ENCODE measurements at regions of chr4 and their contacts with region 1.

Region 1: DNA sequence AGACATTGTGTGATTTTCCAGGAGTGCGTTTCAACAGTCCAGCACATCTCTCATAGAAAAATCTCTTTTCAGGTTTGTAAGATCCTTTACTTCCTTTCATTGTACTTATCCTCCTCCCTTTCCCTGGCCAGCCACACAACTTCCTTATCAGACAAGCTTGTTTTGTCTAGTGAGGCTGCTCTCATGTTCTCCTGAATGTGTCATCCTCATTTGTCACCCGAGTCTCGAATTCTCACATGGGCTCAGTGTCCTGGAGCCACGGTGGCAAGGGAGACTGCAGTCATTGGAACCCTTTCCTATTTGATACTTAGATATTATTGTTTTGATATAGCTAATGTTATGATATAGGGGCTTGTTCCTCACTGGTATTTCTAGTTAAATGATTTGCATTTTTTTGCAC is 16.9 kb downstream of the SYNPO2 start:
- DNase-seq: peak; percentile 57
- ATAC-seq: peak; percentile 35
- H3K4me3 ChIP-seq: no peak overlapping the region
- H3K27ac ChIP-seq: no peak overlapping the region
- H3K4me1 ChIP-seq: peaks cover 2% of the 10 kb centered on the region
- H3K27me3 ChIP-seq: no peaks in the 10 kb centered on the region
- CTCF ChIP-seq: no peak
- POLR2A ChIP-seq: no peak
- RAD21 ChIP-seq: no peak

Region 2: DNA sequence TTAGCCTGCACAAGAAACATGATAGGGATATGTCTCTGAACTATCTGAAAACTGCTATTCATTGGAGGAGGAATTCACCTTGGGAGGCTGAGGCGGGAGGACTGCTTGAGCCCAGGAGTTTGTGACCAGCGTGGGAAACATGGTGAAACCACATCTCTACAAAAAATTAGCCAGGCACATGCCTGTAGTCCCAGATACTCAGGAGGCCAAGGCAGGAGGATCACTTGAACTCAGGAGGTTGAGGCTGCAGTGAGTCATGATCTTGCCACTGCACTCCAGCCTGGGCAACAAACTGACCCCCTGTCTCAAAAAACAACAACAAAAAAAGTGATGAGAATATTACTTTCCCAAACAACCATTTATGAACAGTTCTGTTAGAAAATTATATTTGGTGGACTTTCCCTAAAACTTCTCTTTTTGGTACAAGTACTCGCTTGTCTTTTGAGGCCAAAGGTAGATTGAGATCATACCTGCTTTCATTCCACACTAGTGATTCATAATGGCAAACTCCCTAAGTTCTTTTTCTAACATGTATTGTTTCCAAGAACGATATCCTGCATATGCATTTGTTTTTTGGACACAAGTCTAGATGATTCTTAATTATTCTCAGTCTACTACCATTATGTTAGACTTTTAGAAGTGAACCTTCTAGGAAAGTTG is 186.9 kb before region 1 on chr4:
- CTCF ChIA-PET with region 1: interaction called, 11 read pairs
- POLR2A ChIA-PET with region 1: no interaction called
- dilution Hi-C with region 1: no loop called
- in situ Hi-C with region 1: no loop called
- intact Hi-C with region 1: no loop called
- DNase-seq: no peak
- ATAC-seq: no peak
- H3K4me3 ChIP-seq: no peak overlapping the region
- H3K27ac ChIP-seq: no peak overlapping the region
- H3K4me1 ChIP-seq: no peaks in the 10 kb centered on the region
- H3K27me3 ChIP-seq: no peaks in the 10 kb centered on the region
- CTCF ChIP-seq: no peak
- POLR2A ChIP-seq: no peak
- RAD21 ChIP-seq: no peak

Region 3: DNA sequence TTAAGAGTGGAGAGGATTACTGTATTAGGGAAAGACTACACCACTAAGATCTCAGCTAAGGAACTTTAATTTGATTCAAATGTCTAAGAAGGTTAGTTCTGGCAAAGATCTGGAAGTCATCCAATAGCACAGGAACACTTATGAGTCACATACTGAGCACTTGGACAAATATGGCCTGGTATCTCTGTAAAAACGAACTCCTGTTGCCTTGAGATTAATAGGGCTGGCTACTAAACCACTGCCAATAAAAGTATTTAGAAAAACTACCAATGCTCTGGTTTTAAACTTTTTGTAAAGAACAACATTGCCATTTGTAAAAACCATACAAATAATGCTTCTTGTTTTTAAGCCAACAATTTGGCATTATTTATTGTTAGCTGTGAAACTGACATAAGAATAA is 140.2 kb before region 1 on chr4:
- CTCF ChIA-PET with region 1: no interaction called
- POLR2A ChIA-PET with region 1: no interaction called
- dilution Hi-C with region 1: no loop called
- in situ Hi-C with region 1: no loop called
- intact Hi-C with region 1: no loop called
- DNase-seq: peak; percentile 99
- ATAC-seq: peak; percentile 78
- H3K4me3 ChIP-seq: no peak overlapping the region
- H3K27ac ChIP-seq: no peak overlapping the region; the same call in 1 of the 2 replicates
- H3K4me1 ChIP-seq: peaks cover 20% of the 10 kb centered on the region
- H3K27me3 ChIP-seq: no peaks in the 10 kb centered on the region
- CTCF ChIP-seq: no peak
- POLR2A ChIP-seq: no peak
- RAD21 ChIP-seq: no peak

Measured in IMR-90 (cell line).